ENCODE measurements at regions of chr11 and their contacts with region 1.

Region 1: GRCh38 chr11:64652586-64653387 is 61.8 kb downstream of the SLC22A12 start:
- DNase-seq: no peak
- H3K4me3 ChIP-seq: no peak overlapping the region
- H3K27ac ChIP-seq: no peak overlapping the region
- H3K4me1 ChIP-seq: peaks cover 0 to 8% (median 6%) of the 10 kb centered on the region in 4 donors
- H3K27me3 ChIP-seq: peaks cover 0 to 32% (median 0%) of the 10 kb centered on the region in 4 donors
- CTCF ChIP-seq: peak in 2 of 3 experiments; percentile 86 to 87
- EP300 ChIP-seq: no peak
- POLR2A ChIP-seq: no peak

Region 2: GRCh38 chr11:64448599-64449556 is 203.9 kb before region 1 on chr11:
- intact Hi-C with region 1: loop called (anchors 5 kb)
- DNase-seq: no peak
- H3K4me3 ChIP-seq: peak overlapping the region; percentile 35 to 52 (median 40)
- H3K27ac ChIP-seq: peak overlapping the region in 3 of 4 donors; percentile 3 to 51 (median 38)
- H3K4me1 ChIP-seq: peaks cover 15 to 23% (median 21%) of the 10 kb centered on the region in 4 donors
- H3K27me3 ChIP-seq: peaks cover 0 to 39% (median 0%) of the 10 kb centered on the region in 4 donors
- CTCF ChIP-seq: peak; percentile 73 to 87 (median 74)
- EP300 ChIP-seq: no peak
- POLR2A ChIP-seq: no peak

Region 3: DNA sequence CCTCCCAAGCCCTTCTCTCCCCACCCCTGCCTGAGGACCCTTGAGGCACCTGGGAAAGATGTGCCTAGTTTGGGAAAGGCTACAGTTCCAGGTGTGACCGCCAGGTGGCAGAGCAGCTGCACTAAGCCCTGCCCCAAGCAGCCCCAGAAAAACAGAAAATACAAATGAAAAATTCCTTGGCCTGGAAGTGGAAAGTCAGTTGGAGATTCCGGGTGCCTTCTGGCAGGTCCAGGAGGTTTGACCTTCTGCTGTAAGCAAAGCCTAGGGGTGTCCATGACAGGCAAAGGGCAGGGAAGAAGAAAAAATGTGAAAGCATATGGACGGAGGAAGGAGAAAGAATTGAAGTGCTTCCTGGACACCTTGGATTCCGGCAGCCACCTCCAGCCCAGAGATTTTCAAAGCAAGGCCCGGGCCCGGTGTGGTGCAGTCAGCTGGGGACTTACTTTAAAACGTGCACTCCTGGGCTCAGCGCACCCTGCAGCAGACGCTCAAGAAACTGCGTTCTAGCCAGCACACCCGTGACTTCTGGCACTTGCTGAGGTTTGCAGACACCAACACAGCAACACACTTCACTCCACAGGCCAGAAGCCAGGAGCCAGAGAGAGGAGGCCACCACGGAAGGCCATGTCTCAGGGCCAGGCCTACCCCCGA is 99.1 kb before region 1 on chr11:
- intact Hi-C with region 1: loop called (anchors 1 kb)
- DNase-seq: no peak
- H3K4me3 ChIP-seq: no peak overlapping the region
- H3K27ac ChIP-seq: peak overlapping the region; percentile 61 to 70 (median 65)
- H3K4me1 ChIP-seq: peaks cover 15 to 28% (median 25%) of the 10 kb centered on the region in 4 donors
- H3K27me3 ChIP-seq: no peaks in the 10 kb centered on the region
- CTCF ChIP-seq: peak; percentile 95 to 99 (median 98)
- EP300 ChIP-seq: no peak
- POLR2A ChIP-seq: no peak

Region 4: DNA sequence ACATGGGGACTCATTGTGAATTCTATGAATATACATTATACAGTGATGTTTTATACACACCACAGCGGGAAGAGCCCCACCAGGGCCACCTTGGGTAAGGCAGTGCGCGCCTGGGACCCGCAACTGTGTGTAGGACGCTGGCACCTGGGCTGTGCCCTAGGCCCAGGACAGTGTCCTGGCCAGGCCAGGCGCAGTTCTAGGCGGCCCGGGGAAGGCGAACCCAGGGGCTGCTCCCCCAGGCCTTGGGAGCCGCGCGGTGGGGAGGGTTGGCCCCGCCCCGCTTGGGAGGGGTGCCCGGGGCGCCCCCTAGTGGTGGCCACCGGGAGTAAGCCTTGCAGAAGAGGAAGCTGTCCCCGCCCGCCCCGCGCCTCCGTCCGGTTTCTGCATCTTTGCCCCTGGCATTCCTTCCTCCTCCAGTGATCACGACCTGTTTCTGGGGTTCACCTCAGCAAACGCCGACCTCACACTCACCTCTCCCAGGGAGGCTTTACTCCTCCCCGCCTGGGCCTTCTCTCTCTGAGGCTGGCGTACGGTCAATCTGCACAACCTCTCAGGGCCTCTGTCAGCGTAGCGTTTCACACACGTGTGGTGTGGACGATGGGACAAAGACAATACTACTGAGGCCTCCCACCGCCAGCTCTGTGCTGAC is 235.1 kb after region 1 on chr11:
- intact Hi-C with region 1: no loop called
- DNase-seq: no peak
- H3K4me3 ChIP-seq: peak overlapping the region; percentile 31 to 41 (median 36)
- H3K27ac ChIP-seq: peak overlapping the region; percentile 71 to 79 (median 74)
- H3K4me1 ChIP-seq: peaks cover 18 to 22% (median 19%) of the 10 kb centered on the region in 4 donors
- H3K27me3 ChIP-seq: no peaks in the 10 kb centered on the region
- CTCF ChIP-seq: peak in 2 of 3 experiments; percentile 95 to 97
- EP300 ChIP-seq: no peak
- POLR2A ChIP-seq: no peak